AG04449 (cell line): ENCODE measurements at regions of chr2 and their contacts with region 1.

Region 1: DNA sequence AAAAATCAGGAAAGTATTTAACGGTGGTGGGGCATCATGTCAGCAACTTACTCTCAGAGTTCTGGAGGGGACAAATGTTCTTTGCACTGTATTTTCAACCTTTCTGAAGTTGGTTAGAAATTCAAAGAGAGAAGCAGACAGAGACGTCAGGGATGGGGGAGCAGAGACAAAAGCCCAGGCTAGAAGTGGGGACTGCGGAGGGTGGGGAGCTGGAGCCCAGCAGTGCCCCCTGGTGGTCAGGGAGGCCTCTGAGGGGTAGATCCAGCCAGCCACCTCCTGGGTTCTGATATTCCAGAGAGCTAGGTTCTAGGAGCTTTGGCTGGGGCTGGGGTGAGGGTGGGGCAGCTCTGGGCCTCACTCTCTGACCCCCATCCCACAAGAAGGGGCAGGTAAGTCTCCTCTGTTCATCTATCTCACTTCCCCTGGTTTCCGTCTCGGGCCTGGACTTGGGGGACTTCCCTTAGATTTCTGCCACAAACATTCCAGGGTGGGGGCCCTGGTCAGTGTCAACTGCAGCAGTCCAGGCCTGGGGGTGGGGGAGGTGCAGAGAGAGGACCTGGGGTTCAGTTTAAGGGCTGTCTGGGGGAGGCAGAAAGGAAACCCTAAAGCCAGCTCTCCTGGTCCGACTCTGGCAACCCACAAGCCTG is 8.9 kb downstream of the TNS1 start:
- DNase-seq: no peak
- H3K4me3 ChIP-seq: no peak overlapping the region
- CTCF ChIP-seq: peak; percentile 89

Region 2: DNA sequence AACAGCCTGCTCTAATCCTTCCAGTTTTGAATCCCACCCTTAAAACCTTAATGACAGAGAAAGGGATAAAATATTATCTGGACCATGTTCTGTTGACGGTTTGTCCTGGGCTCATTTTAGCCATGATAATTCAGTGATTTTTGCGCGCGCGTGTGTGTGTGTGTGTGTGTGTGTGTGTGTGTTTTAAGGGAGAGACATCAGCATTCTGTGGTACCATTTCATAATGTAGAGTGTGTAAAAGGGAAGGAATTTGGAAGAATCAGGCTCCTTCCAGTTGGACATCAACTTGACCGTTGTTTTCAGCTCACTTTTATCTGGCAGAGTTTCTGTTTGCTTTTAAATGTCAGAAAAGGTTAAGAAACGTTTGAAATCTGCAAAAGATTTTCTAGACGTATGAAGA is 526.6 kb before region 1 on chr2:
- CTCF ChIA-PET with region 1: no interaction called
- POLR2A ChIA-PET with region 1: no interaction called
- DNase-seq: no peak
- H3K4me3 ChIP-seq: no peak overlapping the region
- CTCF ChIP-seq: no peak

Region 3: DNA sequence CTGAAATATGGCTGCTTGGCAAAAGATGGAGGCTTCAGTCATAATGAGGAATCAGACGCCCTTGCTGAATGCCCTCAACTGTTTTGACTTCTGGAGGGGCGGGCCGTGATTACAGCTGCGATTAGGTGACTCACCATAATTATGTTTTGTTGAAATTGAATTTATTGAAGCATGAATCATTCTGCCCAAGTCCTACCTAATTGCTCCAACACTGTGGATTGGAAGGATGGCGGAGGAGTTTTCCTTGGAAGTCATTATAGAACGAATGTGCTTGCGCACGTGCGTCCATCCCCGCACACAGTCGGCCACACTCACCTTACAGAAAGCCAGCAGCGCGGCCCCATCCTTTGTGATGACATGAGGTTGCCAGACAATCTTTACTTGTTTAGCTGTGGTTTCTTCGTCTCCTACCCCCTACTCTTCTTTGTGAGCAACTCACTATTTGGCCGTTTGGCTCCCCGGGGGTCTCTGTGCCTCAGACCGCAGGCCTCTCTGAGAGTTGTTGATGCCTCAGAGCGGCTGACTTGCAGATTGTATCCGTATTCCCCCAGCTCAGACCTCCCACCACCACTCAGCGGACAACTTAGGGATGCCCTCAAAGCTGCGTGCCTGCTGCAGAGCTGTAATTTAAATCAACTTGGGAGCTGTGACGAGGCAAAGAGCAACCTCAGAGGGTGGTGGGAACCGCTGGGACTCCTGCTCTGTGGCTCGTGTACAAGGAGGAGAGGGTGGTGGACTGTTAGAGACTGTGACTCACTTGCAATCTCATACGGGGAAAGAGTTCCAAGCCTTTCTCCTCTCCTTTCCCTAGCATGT is 504.6 kb before region 1 on chr2:
- CTCF ChIA-PET with region 1: no interaction called
- POLR2A ChIA-PET with region 1: no interaction called
- DNase-seq: no peak
- H3K4me3 ChIP-seq: peak overlapping the region; percentile 23
- CTCF ChIP-seq: no peak

Region 4: GRCh38 chr2:217729421-217730053 is 264.4 kb before region 1 on chr2:
- CTCF ChIA-PET with region 1: no interaction called
- POLR2A ChIA-PET with region 1: no interaction called
- DNase-seq: no peak
- H3K4me3 ChIP-seq: no peak overlapping the region
- CTCF ChIP-seq: no peak

Region 5: GRCh38 chr2:217864963-217865772 is 128.8 kb before region 1 on chr2:
- CTCF ChIA-PET with region 1: interaction called, 10 read pairs
- POLR2A ChIA-PET with region 1: no interaction called
- DNase-seq: no peak
- H3K4me3 ChIP-seq: no peak overlapping the region
- CTCF ChIP-seq: no peak

Region 6: GRCh38 chr2:217943446-217944389 is 50.2 kb before region 1 on chr2:
- CTCF ChIA-PET with region 1: interaction called, 15 read pairs
- POLR2A ChIA-PET with region 1: no interaction called
- DNase-seq: no peak
- H3K4me3 ChIP-seq: peak overlapping the region; percentile 89
- CTCF ChIP-seq: peak; percentile 68

Region 7: GRCh38 chr2:217972490-217972889 is 21.4 kb before region 1 on chr2:
- CTCF ChIA-PET with region 1: interaction called, 74 read pairs
- POLR2A ChIA-PET with region 1: no interaction called
- DNase-seq: no peak
- H3K4me3 ChIP-seq: no peak overlapping the region
- CTCF ChIP-seq: no peak

Region 8: GRCh38 chr2:218010140-218010983 is 16.4 kb after region 1 on chr2:
- CTCF ChIA-PET with region 1: interaction called, 54 read pairs
- POLR2A ChIA-PET with region 1: interaction called, 5 read pairs
- DNase-seq: no peak
- H3K4me3 ChIP-seq: peak overlapping the region; percentile 74
- CTCF ChIP-seq: peak; percentile 82

Region 9: DNA sequence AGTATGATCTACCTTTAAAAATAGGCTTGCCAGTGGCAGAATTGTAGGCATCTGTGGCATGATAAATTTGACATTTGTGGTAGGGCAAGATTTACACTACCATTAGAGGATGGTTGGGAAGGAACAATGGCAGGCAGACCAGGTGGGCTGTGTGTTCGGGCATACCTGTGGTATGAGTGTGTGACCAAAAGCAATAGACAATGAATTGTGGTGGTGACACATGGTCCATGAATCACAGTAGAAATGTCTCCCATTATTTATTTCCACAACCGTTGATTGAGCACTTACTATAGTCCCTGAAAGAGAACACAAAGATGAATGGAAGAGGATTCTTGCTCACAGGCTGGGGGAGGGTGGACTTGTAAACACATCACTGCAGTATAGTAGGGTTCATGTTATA is 45.2 kb after region 1 on chr2:
- CTCF ChIA-PET with region 1: interaction called, 10 read pairs
- POLR2A ChIA-PET with region 1: no interaction called
- DNase-seq: no peak
- H3K4me3 ChIP-seq: no peak overlapping the region
- CTCF ChIP-seq: no peak